ENCODE measurements at regions of chr5 and their contacts with region 1.

Region 1: DNA sequence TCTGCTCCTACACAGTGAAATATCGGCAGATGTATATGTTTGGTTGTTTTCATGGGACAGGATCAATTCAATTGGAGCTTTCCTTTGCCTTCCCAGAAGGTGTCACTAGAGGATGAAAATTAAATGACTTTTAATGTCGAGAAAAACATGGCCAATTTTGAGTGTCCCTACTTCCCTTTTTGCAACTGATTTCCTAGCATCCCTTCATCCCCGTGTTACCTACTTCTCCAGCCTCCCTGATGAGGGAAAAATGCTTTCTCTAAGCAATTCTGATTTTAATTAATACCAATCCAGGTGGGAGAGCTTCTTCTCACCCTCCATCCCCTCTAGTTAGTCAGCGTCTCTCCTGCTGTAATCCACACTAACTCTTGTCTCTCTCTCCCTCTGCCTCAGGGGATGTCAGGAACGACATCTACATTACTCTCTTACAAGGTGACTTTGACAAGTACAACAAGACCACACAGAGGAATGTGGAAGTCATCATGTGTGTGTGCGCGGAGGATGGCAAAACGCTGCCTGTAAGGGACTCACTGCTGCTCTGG is 64.9 kb downstream of the DOCK2 start:
- DNase-seq: peak; percentile 37
- H3K4me3 ChIP-seq: no peak overlapping the region; a peak in 1 of 4 replicates
- H3K27ac ChIP-seq: peak overlapping the region in 1 of 2 experiments; percentile 6; a peak in 1 of 4 replicates
- H3K4me1 ChIP-seq: peaks cover 3 to 31% of the 10 kb centered on the region in 2 experiments; a peak in 3 of 4 replicates
- H3K27me3 ChIP-seq: no peaks in the 10 kb centered on the region
- CTCF ChIP-seq: peak; percentile 74
- EP300 ChIP-seq: no peak
- RAD21 ChIP-seq: peak; percentile 87

Region 2: GRCh38 chr5:169511708-169512107 is 190.3 kb before region 1 on chr5:
- CTCF ChIA-PET with region 1: no interaction called
- POLR2A ChIA-PET with region 1: no interaction called
- DNase-seq: no peak
- H3K4me3 ChIP-seq: no peak overlapping the region
- H3K27ac ChIP-seq: peak overlapping the region in 1 of 2 experiments; percentile 60; a peak in 1 of 4 replicates
- H3K4me1 ChIP-seq: peaks cover 0 to 6% of the 10 kb centered on the region in 2 experiments; a peak in 2 of 4 replicates
- H3K27me3 ChIP-seq: no peaks in the 10 kb centered on the region
- CTCF ChIP-seq: peak; percentile 18; the same call in 1 of the 2 replicates
- EP300 ChIP-seq: no peak
- RAD21 ChIP-seq: no peak

Region 3: DNA sequence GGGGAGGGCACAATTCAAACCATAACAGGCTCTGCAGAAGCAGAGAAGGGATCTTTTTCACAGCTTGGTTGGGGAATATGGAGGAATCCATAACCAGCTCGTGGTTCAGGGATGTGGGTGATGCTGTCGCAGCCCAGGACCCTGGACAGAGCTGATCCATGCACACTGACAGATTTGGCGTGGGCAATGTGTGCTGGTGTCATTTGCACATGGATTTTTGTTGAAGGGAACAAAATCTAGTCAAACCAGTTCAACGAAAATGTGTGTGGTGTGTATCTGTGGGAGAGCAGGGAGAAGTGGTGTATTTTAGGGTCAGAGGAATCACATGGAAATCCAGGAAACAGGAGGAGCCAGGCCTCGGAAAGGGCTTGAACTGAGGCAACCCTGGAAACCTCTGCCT is 60.7 kb before region 1 on chr5:
- CTCF ChIA-PET with region 1: no interaction called
- POLR2A ChIA-PET with region 1: no interaction called
- DNase-seq: no peak
- H3K4me3 ChIP-seq: no peak overlapping the region
- H3K27ac ChIP-seq: no peak overlapping the region
- H3K4me1 ChIP-seq: no peaks in the 10 kb centered on the region
- H3K27me3 ChIP-seq: no peaks in the 10 kb centered on the region
- CTCF ChIP-seq: no peak
- EP300 ChIP-seq: no peak
- RAD21 ChIP-seq: no peak

Region 4: DNA sequence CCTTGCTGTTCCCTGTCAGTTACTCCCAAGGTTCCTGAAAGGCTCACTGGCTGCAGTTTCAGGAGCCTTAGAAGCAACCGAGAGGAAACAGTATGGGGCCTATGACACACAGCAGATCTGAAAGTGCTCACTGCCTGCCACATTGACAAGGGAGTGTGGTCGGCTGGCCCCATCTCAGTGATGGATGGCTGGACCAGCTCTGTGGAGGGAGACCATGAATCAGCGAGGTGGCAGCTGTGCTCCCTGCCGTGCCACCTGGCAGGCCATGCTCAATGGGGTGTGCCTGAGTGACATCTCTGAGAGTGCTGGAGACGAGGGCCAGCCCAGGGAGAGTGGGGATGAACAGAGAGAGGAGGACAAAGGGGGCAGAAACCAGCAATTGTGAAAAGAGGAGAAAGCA is 15.8 kb before region 1 on chr5:
- CTCF ChIA-PET with region 1: interaction called, 17 read pairs
- POLR2A ChIA-PET with region 1: no interaction called
- DNase-seq: no peak
- H3K4me3 ChIP-seq: no peak overlapping the region
- H3K27ac ChIP-seq: no peak overlapping the region
- H3K4me1 ChIP-seq: no peaks in the 10 kb centered on the region
- H3K27me3 ChIP-seq: no peaks in the 10 kb centered on the region
- CTCF ChIP-seq: no peak
- EP300 ChIP-seq: no peak
- RAD21 ChIP-seq: no peak

Region 5: GRCh38 chr5:169716278-169716677 is 14.3 kb after region 1 on chr5:
- CTCF ChIA-PET with region 1: interaction called, 23 read pairs
- POLR2A ChIA-PET with region 1: no interaction called
- DNase-seq: no peak
- H3K4me3 ChIP-seq: no peak overlapping the region
- H3K27ac ChIP-seq: 0 out of 4 replicates have a peak overlapping the region, but pooled peaks of 1 of the 2 experiments have one; percentile 22
- H3K4me1 ChIP-seq: peaks cover 0 to 20% of the 10 kb centered on the region in 2 experiments; a peak in 3 of 4 replicates
- H3K27me3 ChIP-seq: no peaks in the 10 kb centered on the region
- CTCF ChIP-seq: no peak
- EP300 ChIP-seq: no peak; a peak in 1 of 4 replicates
- RAD21 ChIP-seq: no peak

Region 6: DNA sequence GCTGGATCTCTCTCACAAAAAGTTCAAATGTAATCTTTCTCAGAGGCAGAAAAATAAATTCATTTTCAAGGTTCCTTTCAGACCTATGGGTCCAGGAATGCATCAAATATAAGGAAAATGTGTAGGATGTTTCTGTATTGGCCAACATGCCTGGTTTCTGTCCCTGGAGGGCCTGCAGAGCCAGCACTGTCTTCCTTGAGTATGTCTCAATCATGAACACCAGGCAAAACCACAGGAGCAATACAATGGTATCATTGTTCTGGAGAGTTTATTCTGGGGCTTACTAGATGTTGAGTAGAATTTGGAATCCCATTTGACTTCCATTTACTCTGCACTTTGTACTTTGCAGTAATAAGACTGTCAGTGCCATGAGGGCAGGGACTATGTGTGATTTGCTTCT is 254.8 kb after region 1 on chr5:
- CTCF ChIA-PET with region 1: no interaction called
- POLR2A ChIA-PET with region 1: no interaction called
- DNase-seq: no peak
- H3K4me3 ChIP-seq: no peak overlapping the region
- H3K27ac ChIP-seq: no peak overlapping the region
- H3K4me1 ChIP-seq: no peaks in the 10 kb centered on the region
- H3K27me3 ChIP-seq: no peaks in the 10 kb centered on the region
- CTCF ChIP-seq: no peak
- EP300 ChIP-seq: no peak
- RAD21 ChIP-seq: no peak

Measured in SK-N-SH (cell line).